AG04449 (cell line): ENCODE measurements at regions of chr15 and their contacts with region 1.

Region 1: GRCh38 chr15:64905119-64905831 is 6.4 kb upstream of the ANKDD1A start:
- DNase-seq: no peak
- H3K4me3 ChIP-seq: peak overlapping the region; percentile 43
- CTCF ChIP-seq: peak; percentile 90

Region 2: GRCh38 chr15:64775551-64776401 is 129.5 kb before region 1 on chr15 and contains the start of gene RBPMS2:
- CTCF ChIA-PET with region 1: no interaction called
- POLR2A ChIA-PET with region 1: no interaction called
- DNase-seq: no peak
- H3K4me3 ChIP-seq: peak within 1 kb of the TSS; percentile 46
- CTCF ChIP-seq: no peak

Region 3: GRCh38 chr15:64841258-64842095 is 63.8 kb before region 1 on chr15 and contains the start of gene PLEKHO2:
- CTCF ChIA-PET with region 1: interaction called, 24 read pairs
- POLR2A ChIA-PET with region 1: interaction called, 4 read pairs
- DNase-seq: no peak
- H3K4me3 ChIP-seq: peak within 1 kb of the TSS; percentile 93
- CTCF ChIP-seq: peak; percentile 37

Region 4: GRCh38 chr15:64851503-64851840 is 53.8 kb before region 1 on chr15:
- CTCF ChIA-PET with region 1: interaction called, 12 read pairs
- POLR2A ChIA-PET with region 1: no interaction called
- DNase-seq: peak; percentile 82
- H3K4me3 ChIP-seq: no peak overlapping the region
- CTCF ChIP-seq: no peak

Region 5: GRCh38 chr15:64893481-64894394 is 11.5 kb before region 1 on chr15:
- CTCF ChIA-PET with region 1: interaction called, 31 read pairs
- POLR2A ChIA-PET with region 1: interaction called, 3 read pairs
- DNase-seq: peak; percentile 63
- H3K4me3 ChIP-seq: no peak overlapping the region
- CTCF ChIP-seq: no peak

Region 6: DNA sequence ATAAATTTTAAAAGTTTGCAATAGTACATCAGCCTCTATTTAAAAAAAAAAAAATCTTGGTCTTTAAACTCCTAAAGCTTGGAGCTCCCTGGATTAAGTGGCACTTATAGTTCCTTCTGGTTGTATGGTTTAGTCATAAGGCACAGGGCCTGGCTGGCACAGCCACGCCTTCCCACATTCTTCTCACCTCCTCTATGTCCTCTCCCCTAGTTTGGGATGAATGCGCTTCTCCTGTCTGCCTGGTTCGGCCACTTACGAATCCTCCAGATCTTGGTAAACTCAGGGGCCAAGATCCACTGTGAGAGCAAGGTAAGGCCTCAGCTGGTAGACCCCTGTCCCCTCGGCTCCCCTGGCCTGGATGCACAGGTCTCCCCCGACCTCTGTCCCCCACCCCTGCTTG is 16.4 kb after region 1 on chr15:
- CTCF ChIA-PET with region 1: interaction called, 32 read pairs
- POLR2A ChIA-PET with region 1: no interaction called
- DNase-seq: no peak
- H3K4me3 ChIP-seq: no peak overlapping the region
- CTCF ChIP-seq: no peak